Right ventricle myocardium inferior (tissue), 1 donor: ENCODE measurements at regions of chr3 and their contacts with region 1.

Region 1: DNA sequence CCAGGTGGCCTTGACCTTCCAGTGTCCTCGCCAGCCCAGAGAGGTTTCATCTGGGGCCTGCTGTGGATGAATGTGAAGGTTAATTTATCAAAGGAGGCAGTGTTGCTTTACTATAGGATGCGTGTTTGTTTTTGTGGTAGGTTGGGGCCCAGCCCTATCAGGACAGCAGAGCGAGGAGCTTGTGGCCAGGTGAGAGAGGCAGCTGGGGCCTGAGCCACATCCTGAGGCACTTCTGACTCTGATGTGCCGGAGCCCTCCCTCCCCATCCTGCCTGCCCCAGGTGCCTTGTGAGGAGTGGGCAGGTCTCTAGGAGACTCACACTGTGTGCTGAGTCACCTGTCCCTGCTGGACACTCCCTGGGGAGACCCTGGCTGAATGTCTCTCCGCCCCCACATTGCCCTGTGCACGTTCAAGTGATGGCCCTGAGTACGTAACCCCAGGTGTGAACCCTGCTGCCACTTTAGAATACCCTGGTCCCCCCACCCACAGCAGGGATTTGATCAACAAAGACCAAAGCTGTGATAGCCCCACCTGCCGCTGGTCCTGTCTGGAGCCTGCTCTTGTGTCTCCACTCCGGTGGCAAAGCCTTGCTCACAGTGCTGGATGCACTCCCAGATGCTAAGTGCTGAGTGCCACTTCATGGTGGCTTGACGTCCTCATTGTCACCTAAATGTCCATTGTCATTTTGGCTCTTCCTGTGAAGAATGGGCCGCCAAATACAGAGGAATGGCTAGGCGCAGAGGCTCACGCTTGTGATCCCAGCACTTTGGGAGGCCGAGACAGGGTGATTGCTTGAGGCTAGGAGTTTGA is 16.0 kb downstream of the FBLN2 start:
- DNase-seq: no peak
- ATAC-seq: peak; percentile 73

Region 2: GRCh38 chr3:13518516-13518953 is 46.4 kb before region 1 on chr3:
- intact Hi-C with region 1: loop called (anchors 5 kb)
- DNase-seq: peak; percentile 92
- ATAC-seq: peak; percentile 66